Posterior vena cava (tissue), 2 donors: ENCODE measurements at regions of chr5 and their contacts with region 1.

Region 1: GRCh38 chr5:136864960-136865359 is 499.6 kb upstream of the TRPC7 start:
- DNase-seq: no peak

Region 2: DNA sequence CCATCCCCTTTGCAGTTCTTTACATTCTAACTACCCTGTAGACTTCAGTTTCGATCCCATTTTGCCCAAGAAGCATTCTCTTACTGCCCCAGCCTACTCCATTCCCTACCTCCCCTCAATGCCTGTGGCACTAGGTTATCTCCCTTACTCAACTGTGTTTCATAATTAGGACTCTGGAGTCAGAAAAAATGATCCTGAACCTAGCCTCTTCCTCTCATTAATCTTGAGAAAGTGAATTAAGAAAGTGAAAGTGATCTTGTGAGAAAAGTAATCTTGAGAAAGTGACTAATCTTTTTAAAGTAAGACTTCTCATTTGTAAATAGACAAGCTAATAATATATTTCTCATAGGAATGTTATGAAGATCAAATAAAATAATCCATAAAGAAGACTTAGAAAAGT is 55.6 kb before region 1 on chr5:
- intact Hi-C with region 1: loop called in 1 of 2 experiments (anchors 2 kb)
- DNase-seq: no peak

Region 3: GRCh38 chr5:136853971-136854370 is 11.0 kb before region 1 on chr5:
- intact Hi-C with region 1: loop called in 1 of 2 experiments (anchors 1 kb)
- DNase-seq: no peak

Region 4: GRCh38 chr5:136894070-136894469 is 29.1 kb after region 1 on chr5:
- intact Hi-C with region 1: no loop called
- DNase-seq: no peak